ENCODE measurements at regions of chr5 and their contacts with region 1.

Region 1: GRCh38 chr5:149345147-149345875 is at the start of gene GRPEL2:
- DNase-seq: peak; percentile 97

Region 2: GRCh38 chr5:149317281-149318048 is 27.8 kb before region 1 on chr5:
- CTCF ChIA-PET with region 1: interaction called, 3 read pairs
- POLR2A ChIA-PET with region 1: interaction called, 28 read pairs
- DNase-seq: peak; percentile 52

Region 3: GRCh38 chr5:149333711-149334443 is 11.4 kb before region 1 on chr5:
- CTCF ChIA-PET with region 1: no interaction called
- POLR2A ChIA-PET with region 1: interaction called, 24 read pairs
- DNase-seq: no peak

Region 4: GRCh38 chr5:149357370-149358293 is 12.3 kb after region 1 on chr5 and contains the start of gene PCYOX1L:
- CTCF ChIA-PET with region 1: interaction called, 4 read pairs
- POLR2A ChIA-PET with region 1: interaction called, 160 read pairs
- DNase-seq: peak; percentile 96